OCI-LY7 (cell line): ENCODE measurements at regions of chr6 and their contacts with region 1.

Region 1: GRCh38 chr6:70369332-70369950 is 43.9 kb upstream of the FAM135A start:
- DNase-seq: peak; percentile 58
- H3K4me3 ChIP-seq: no peak overlapping the region
- H3K27ac ChIP-seq: no peak overlapping the region
- H3K4me1 ChIP-seq: no peaks in the 10 kb centered on the region
- CTCF ChIP-seq: peak; percentile 82

Region 2: DNA sequence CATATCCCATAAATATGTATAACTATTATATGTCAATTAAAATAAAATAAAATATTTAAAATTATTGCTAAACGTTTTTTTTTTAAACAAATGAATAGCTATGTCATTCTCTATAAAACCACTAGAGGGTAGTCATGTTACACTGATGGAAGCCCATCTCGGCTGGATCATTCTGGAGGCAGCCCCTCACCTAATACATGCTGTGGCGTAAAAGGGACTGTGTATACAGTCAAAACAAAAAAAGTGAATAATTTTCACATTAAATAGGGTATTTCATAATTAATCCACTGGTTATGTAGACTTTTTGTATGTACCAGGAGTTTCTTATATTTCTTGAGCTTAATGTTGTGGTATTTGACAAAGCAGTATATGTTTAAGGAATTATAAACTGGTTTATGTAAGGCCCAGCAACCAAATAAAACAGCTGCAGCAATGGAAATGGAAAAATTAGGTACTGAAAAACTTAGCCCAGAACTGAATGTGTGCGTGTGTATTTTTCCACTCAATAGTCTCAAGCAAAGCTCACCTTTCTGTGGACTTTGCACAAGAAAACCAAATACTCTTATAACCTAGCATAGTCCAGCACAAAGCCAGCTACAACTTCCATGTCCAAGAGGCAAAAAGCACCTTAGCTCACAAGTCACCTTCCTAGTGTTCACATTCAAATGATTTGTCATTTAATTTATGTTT is 148.3 kb before region 1 on chr6:
- CTCF ChIA-PET with region 1: interaction called, 4 read pairs
- POLR2A ChIA-PET with region 1: no interaction called
- intact Hi-C with region 1: loop called (anchors 2 kb)
- DNase-seq: peak; percentile 44
- H3K4me3 ChIP-seq: no peak overlapping the region
- H3K27ac ChIP-seq: no peak overlapping the region
- H3K4me1 ChIP-seq: no peaks in the 10 kb centered on the region
- CTCF ChIP-seq: peak; percentile 78

Region 3: GRCh38 chr6:70310063-70310694 is 59.3 kb before region 1 on chr6:
- CTCF ChIA-PET with region 1: interaction called, 3 read pairs
- POLR2A ChIA-PET with region 1: interaction called, 3 read pairs
- intact Hi-C with region 1: loop called (anchors 2 kb)
- DNase-seq: peak; percentile 38
- H3K4me3 ChIP-seq: no peak overlapping the region
- H3K27ac ChIP-seq: no peak overlapping the region
- H3K4me1 ChIP-seq: no peaks in the 10 kb centered on the region
- CTCF ChIP-seq: peak; percentile 88

Region 4: GRCh38 chr6:70456735-70457134 is 87.3 kb after region 1 on chr6:
- CTCF ChIA-PET with region 1: no interaction called
- POLR2A ChIA-PET with region 1: no interaction called
- intact Hi-C with region 1: no loop called
- DNase-seq: no peak
- H3K4me3 ChIP-seq: no peak overlapping the region
- H3K27ac ChIP-seq: no peak overlapping the region
- H3K4me1 ChIP-seq: no peaks in the 10 kb centered on the region
- CTCF ChIP-seq: no peak